Endothelial cell of umbilical vein (primary cell): ENCODE measurements at regions of chr17 and their contacts with region 1.

Region 1: DNA sequence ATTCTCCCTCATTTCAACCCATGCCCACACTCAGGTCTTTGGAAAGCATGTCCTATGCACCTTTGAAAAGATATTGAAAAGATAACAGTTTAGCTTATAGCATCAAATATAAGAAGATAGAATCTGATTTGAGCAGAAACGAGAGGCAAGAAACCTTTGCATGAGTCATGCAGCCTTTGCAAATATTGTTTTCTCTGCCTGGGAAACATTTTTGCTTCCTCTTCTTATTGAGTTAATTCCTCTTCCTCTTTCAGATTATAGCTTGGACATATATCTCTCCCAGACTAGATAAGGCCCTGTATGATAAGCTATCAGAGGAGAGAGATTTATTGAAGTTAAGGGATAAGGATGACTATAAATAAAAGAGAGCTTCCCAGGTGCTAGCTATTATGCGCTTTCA is 46.1 kb upstream of the KCNJ2 start:
- DNase-seq: peak; percentile 56
- H3K4me3 ChIP-seq: no peak overlapping the region
- H3K27ac ChIP-seq: no peak overlapping the region
- H3K4me1 ChIP-seq: peaks cover 36% of the 10 kb centered on the region
- H3K27me3 ChIP-seq: no peaks in the 10 kb centered on the region
- CTCF ChIP-seq: no peak
- POLR2A ChIP-seq: no peak

Region 2: GRCh38 chr17:70110443-70110880 is 12.7 kb before region 1 on chr17:
- CTCF ChIA-PET with region 1: interaction called, 7 read pairs
- POLR2A ChIA-PET with region 1: interaction called, 4 read pairs
- dilution Hi-C with region 1: no loop called
- intact Hi-C with region 1: loop called (anchors 1 kb)
- DNase-seq: peak; percentile 99
- H3K4me3 ChIP-seq: no peak overlapping the region
- H3K27ac ChIP-seq: peak overlapping the region; percentile 82
- H3K4me1 ChIP-seq: peaks cover 27% of the 10 kb centered on the region
- H3K27me3 ChIP-seq: no peaks in the 10 kb centered on the region
- CTCF ChIP-seq: no peak
- POLR2A ChIP-seq: peak; percentile 42

Region 3: DNA sequence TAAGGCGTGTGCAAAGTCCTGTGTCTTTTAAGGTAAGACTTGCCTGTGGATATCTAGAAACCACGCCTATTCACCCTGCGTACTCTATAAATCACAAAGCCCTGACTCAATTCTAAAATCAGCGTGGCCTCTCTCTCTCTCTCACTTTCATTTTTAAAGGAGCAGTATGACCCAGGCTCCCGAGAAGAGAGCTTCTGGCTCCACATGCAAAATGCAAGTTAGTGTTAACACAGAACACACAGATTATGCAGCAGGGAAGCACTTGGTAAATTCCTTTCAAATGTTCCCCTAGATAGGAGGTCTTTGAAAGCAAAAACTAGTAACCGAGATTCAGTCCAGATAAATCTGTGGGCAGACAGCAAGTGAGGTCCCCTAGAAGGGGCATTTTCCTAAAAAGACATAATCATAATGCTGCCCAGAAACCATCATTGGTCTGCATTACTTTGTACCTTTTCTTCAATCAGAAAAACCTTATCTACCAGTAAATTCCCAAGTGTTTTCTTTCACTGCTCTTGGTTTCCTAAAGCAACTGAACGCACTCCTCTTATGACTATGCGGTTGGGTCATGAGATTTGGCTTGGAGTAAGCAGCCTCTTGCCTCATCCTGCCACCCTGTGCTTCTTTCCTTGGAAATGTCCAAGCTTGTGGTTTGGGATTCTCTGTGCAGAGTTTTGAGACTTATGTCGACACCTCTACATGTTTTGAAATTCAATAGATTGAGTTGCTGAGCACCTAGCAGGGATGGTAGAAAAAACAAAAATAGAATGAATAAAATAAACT is 14.4 kb after region 1 on chr17:
- CTCF ChIA-PET with region 1: interaction called, 5 read pairs
- POLR2A ChIA-PET with region 1: no interaction called
- dilution Hi-C with region 1: no loop called
- intact Hi-C with region 1: loop called (anchors 1 kb)
- DNase-seq: peak; percentile 80
- H3K4me3 ChIP-seq: peak overlapping the region in 2 of 3 experiments; percentile 47 to 70
- H3K27ac ChIP-seq: peak overlapping the region; percentile 43
- H3K4me1 ChIP-seq: peaks cover 14% of the 10 kb centered on the region
- H3K27me3 ChIP-seq: no peaks in the 10 kb centered on the region
- CTCF ChIP-seq: no peak
- POLR2A ChIP-seq: no peak